Colonic mucosa (tissue), 4 donors: ENCODE measurements at regions of chr13 and their contacts with region 1.

Region 1: GRCh38 chr13:76886292-76887075 is at the start of gene KCTD12:
- DNase-seq: peak; percentile 85
- H3K4me3 ChIP-seq: peak within 1 kb of the TSS; percentile 64
- H3K27ac ChIP-seq: peak within 1 kb of the TSS; percentile 71
- H3K4me1 ChIP-seq: no peaks in the 10 kb centered on the region
- H3K27me3 ChIP-seq: no peaks in the 10 kb centered on the region
- CTCF ChIP-seq: no peak
- total RNA-seq, gene KCTD12: 30.3 to 58.4 TPM

Region 2: DNA sequence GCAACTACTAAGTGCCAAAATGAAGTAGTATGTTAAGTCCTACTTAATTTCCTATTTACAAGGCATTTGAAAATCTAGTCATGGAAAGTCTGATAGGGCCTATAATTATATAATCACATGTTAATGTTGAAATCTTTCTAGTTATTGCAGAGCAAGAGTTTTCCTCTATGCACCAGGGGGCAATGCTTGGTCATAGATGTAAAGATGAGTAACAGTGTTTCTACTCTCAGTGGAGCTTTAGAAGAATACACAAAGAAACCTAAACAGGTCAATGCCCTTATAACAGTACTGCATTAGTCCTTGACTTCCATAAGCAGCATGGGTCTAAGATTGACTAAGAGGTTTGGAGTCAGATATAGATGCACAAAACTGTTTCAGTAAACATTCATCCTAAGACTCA is 218.9 kb before region 1 on chr13:
- intact Hi-C with region 1: loop called (anchors 10 kb)
- DNase-seq: peak; percentile 21
- H3K4me3 ChIP-seq: no peak overlapping the region
- H3K27ac ChIP-seq: no peak overlapping the region
- H3K4me1 ChIP-seq: no peaks in the 10 kb centered on the region
- H3K27me3 ChIP-seq: no peaks in the 10 kb centered on the region
- CTCF ChIP-seq: no peak

Region 3: DNA sequence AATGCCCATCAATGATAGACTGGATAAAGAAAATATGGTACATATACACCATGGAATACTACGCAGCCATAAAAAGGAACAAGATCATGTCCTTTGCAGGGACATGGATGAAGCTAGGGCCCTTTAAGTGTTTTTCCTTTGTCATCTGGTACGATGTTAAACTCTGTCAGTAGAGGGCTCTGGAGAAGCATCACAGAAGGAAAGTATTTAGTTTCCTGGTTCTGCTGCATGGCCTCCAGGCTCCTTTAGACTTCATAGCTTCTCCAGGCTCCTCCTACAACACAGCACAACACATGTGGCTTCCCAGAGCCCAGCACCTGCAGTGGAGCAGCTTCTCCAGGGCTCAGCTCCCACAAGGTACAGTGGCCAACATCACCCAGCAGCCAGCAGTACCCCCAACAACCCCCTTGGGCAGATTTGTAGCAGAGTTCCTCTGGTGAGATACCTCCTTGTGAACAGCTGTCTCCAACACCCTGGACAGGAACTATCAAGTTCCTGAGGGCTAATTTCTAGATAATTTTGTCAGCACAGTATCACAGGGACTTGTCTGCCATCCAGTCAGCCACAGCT is 63.7 kb before region 1 on chr13:
- intact Hi-C with region 1: loop called (anchors 5 kb)
- DNase-seq: no peak
- H3K4me3 ChIP-seq: no peak overlapping the region
- H3K27ac ChIP-seq: no peak overlapping the region
- H3K4me1 ChIP-seq: no peaks in the 10 kb centered on the region
- H3K27me3 ChIP-seq: no peaks in the 10 kb centered on the region
- CTCF ChIP-seq: peak; percentile 24

Region 4: DNA sequence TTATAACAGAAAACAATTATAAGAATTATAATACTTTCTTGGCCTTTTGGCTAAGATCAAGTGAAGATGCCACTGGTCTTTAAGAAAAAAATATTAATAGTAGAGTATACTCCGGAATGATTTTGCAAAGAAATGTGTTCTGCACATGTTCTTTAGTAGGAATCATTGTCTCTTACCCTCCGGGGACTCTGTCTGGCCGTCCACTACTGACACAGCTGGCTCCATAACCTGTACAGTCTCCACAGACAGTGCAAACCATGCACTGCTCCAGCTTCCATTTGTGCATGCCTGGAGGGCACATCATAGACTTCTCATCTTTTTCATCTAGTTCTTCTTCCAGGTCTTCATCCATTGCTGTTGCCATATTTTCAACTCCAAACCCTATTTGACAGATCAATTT is 364.5 kb after region 1 on chr13:
- intact Hi-C with region 1: no loop called
- DNase-seq: no peak
- H3K4me3 ChIP-seq: no peak overlapping the region
- H3K27ac ChIP-seq: no peak overlapping the region
- H3K4me1 ChIP-seq: no peaks in the 10 kb centered on the region
- H3K27me3 ChIP-seq: no peaks in the 10 kb centered on the region
- CTCF ChIP-seq: no peak